Activated CD4-positive, alpha-beta memory T cell treated with anti-CD3 and anti-CD28 coated beads, Interleukin-2, amount 10 ng/mL, durations not matched to agents 7 days and 5 days (primary cell): ENCODE measurements at regions of chr1 and their contacts with region 1.

Region 1: GRCh38 chr1:174968750-174969244 is 30.9 kb upstream of the CACYBP start:
- DNase-seq: no peak
- H3K4me3 Mint-ChIP-seq: peak overlapping the region; percentile 62
- H3K27ac Mint-ChIP-seq: peak overlapping the region; percentile 93
- H3K4me1 Mint-ChIP-seq: peaks cover 77% of the 10 kb centered on the region
- H3K27me3 Mint-ChIP-seq: no peaks in the 10 kb centered on the region

Region 2: DNA sequence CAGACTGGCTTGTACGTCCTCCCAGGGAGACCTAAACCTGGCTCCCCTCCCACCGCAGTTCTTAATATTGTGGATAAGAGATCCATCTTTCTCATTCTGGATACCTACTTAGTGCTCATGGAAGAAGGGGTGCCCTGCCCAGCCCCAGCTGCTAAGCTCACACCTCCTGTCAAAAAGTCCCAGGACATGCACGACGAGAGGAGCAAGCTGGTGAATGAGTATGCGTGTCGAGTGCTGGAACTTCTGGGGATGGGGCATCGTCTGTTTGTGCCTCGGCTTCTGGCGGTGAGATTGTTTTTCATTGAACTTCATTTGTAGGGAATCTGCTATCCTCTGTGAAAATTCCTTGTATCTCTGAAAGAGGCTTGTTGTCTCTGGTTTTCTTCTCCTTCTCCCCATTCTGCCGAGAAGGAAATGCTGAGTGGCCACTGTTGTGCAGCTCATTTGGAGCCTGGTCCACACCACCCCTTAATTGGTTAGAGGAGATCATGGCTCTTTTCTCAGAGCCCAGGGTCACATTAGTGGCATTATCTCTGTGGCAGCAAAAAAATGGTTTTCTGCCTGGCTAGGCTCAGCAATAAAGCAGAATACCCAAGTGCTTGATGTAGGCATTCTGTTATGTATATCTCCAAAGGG is 168.5 kb before region 1 on chr1:
- CTCF ChIA-PET with region 1: interaction called, 7 read pairs
- POLR2A ChIA-PET with region 1: interaction called, 44 read pairs
- DNase-seq: peak; percentile 23
- H3K4me3 Mint-ChIP-seq: no peak overlapping the region
- H3K27ac Mint-ChIP-seq: no peak overlapping the region
- H3K4me1 Mint-ChIP-seq: peaks cover 13% of the 10 kb centered on the region
- H3K27me3 Mint-ChIP-seq: no peaks in the 10 kb centered on the region

Region 3: DNA sequence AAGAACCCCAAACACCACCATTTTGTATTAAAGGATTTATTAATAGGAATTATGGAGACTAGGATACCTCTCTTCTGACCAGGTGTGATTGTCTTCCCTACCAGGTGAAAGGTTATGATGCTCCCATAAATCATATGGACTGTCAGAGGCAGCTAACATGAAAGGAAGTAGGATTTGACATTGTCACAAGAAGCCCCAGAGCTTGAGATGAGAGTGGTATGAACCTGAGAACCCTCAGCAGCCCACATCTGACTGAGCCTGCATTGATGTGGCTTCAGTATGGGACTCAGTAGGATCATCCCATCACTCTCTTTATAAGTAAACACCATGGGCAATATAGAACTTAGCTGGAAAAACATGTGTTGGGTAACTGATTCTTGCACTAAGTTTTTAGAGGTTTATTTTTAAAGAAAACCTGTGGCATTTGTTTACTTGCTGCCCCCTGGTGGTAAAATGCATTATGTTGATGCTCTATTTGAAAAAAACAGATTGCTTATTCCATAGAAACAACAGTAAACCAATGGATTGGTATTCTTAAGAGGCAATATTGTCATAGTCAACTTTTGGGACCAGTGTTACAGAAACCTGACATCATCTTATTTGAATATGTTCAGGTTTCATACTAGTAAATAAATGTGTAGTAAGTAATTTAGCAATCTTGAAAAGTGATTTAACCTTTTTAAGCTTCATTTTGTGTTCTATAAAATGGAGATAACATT is 14.3 kb after region 1 on chr1:
- CTCF ChIA-PET with region 1: interaction called, 13 read pairs
- POLR2A ChIA-PET with region 1: interaction called, 13 read pairs
- DNase-seq: no peak
- H3K4me3 Mint-ChIP-seq: no peak overlapping the region
- H3K27ac Mint-ChIP-seq: no peak overlapping the region
- H3K4me1 Mint-ChIP-seq: peaks cover 17% of the 10 kb centered on the region
- H3K27me3 Mint-ChIP-seq: no peaks in the 10 kb centered on the region